Activated naive CD4-positive, alpha-beta T cell treated with anti-CD3 and anti-CD28 coated beads for 36 hours (primary cell): ENCODE measurements at regions of chr20 and their contacts with region 1.

Region 1: GRCh38 chr20:34111702-34112599 is at the start of gene EIF2S2:
- DNase-seq: peak; percentile 97
- H3K4me3 Mint-ChIP-seq: peak within 1 kb of the TSS; percentile 96
- H3K27ac Mint-ChIP-seq: peak within 1 kb of the TSS; percentile 93
- H3K4me1 Mint-ChIP-seq: peaks cover 38% of the 10 kb centered on the region
- H3K27me3 Mint-ChIP-seq: no peaks in the 10 kb centered on the region
- total RNA-seq, gene EIF2S2: 202 to 207 TPM

Region 2: DNA sequence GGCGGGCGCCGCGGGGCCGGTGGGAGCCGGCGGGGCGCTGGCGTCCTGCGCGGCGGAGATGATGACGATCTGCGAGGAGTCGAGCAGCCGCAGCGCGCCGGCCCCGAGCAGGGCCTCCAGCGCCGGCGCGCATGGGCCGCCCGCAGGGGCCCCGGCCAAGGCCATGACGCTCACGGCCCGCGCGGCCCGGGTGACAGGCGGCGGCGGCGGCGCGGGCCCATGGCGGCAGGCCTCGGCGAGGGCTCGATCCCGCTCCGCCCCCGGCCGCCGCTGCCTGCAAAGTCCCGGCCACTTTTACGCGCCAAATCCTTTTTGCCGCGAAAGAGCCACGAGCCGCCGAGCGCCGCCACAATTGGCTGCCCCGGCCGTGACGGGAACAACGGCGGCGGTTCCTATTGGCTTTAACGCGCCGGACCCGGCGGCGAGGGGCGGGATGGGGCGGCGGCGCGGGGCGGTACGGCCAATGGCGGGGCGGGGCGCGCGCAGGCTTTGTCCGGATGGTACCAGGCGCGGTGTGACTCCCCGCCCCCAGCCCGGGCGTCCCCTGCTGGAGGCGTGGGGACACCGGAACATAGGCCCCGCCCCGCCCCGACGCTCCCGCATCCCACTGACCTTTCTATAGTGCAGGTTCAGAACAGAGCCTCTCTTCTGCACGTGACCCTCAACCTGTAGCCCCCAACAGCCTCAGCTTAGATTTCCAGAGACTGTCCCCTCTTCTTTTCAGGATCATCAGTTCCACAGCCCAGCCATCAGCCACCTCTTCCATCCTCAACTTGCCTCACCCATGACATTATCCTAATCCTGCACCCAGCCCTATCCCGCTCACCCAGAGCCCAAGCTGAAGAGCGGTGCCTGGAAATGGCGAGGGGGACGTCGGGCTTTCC is 425.6 kb before region 1 on chr20 and contains the start of gene E2F1:
- CTCF ChIA-PET with region 1: no interaction called
- intact Hi-C with region 1: loop called (anchors 1 kb)
- DNase-seq: peak; percentile 97
- H3K4me3 Mint-ChIP-seq: peak within 1 kb of the TSS; percentile 87
- H3K27ac Mint-ChIP-seq: peak within 1 kb of the TSS; percentile 88
- H3K4me1 Mint-ChIP-seq: peaks cover 62% of the 10 kb centered on the region
- H3K27me3 Mint-ChIP-seq: no peaks in the 10 kb centered on the region
- total RNA-seq, gene E2F1: 69.3 to 70.0 TPM

Region 3: GRCh38 chr20:34069341-34070078 is 42.4 kb before region 1 on chr20:
- CTCF ChIA-PET with region 1: interaction called, 4 read pairs
- intact Hi-C with region 1: loop called (anchors 2 kb)
- DNase-seq: peak; percentile 72
- H3K4me3 Mint-ChIP-seq: no peak overlapping the region
- H3K27ac Mint-ChIP-seq: no peak overlapping the region
- H3K4me1 Mint-ChIP-seq: peaks cover 28% of the 10 kb centered on the region
- H3K27me3 Mint-ChIP-seq: no peaks in the 10 kb centered on the region

Region 4: GRCh38 chr20:34302723-34303528 is 191.0 kb after region 1 on chr20 and contains the start of gene AHCY:
- CTCF ChIA-PET with region 1: no interaction called
- intact Hi-C with region 1: loop called (anchors 1 kb)
- DNase-seq: peak; percentile 95
- H3K4me3 Mint-ChIP-seq: peak within 1 kb of the TSS; percentile 84
- H3K27ac Mint-ChIP-seq: peak within 1 kb of the TSS; percentile 86
- H3K4me1 Mint-ChIP-seq: peaks cover 4% of the 10 kb centered on the region
- H3K27me3 Mint-ChIP-seq: no peaks in the 10 kb centered on the region
- total RNA-seq, gene AHCY: 258 to 261 TPM

Region 5: DNA sequence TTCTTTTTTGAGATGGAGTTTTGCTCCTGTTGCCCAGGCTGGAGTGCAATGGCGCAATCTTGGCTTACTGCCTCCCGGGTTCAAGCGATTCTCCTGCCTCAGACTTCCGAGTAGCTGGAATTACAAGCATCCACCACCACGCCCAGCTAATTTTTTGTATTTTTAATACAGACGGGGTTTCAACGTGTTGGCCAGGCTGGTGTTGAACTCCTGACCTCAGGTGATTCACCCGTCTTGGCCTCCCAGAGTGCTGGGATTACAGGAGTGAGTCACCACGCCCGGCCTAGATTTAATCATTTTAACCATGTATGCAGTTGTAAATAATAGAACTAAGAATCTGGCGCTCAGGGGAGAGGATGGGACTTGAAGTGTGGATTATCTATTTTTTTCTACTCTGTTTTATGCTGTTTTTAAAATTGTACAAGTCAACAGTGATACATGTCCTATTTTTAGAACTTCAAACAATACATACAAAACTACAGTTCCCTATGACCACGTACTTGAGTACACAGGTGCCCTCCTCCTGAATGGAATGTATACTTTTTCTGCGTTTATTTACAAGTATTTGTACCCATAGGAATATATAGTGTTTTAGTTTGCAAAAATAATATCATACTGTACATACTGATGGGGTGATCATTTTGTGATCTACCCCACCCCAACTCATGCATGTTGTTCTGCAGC is 279.0 kb after region 1 on chr20:
- CTCF ChIA-PET with region 1: no interaction called
- intact Hi-C with region 1: no loop called
- DNase-seq: peak; percentile 61
- H3K4me3 Mint-ChIP-seq: no peak overlapping the region
- H3K27ac Mint-ChIP-seq: no peak overlapping the region
- H3K4me1 Mint-ChIP-seq: peaks cover 27% of the 10 kb centered on the region
- H3K27me3 Mint-ChIP-seq: no peaks in the 10 kb centered on the region

Region 6: GRCh38 chr20:34516247-34517113 is 404.5 kb after region 1 on chr20 and contains the start of gene DYNLRB1:
- CTCF ChIA-PET with region 1: no interaction called
- intact Hi-C with region 1: loop called (anchors 10 kb)
- DNase-seq: peak; percentile 96
- H3K4me3 Mint-ChIP-seq: peak within 1 kb of the TSS; percentile 98
- H3K27ac Mint-ChIP-seq: peak within 1 kb of the TSS; percentile 96
- H3K4me1 Mint-ChIP-seq: peaks cover 29% of the 10 kb centered on the region
- H3K27me3 Mint-ChIP-seq: no peaks in the 10 kb centered on the region
- total RNA-seq, gene DYNLRB1: 81.9 to 92.9 TPM

Region 7: GRCh38 chr20:34676642-34677373 is 564.9 kb after region 1 on chr20 and contains the start of gene PIGU:
- CTCF ChIA-PET with region 1: no interaction called
- intact Hi-C with region 1: loop called (anchors 1 kb)
- DNase-seq: peak; percentile 97
- H3K4me3 Mint-ChIP-seq: peak within 1 kb of the TSS; percentile 97
- H3K27ac Mint-ChIP-seq: peak within 1 kb of the TSS; percentile 90
- H3K4me1 Mint-ChIP-seq: peaks cover 29% of the 10 kb centered on the region
- H3K27me3 Mint-ChIP-seq: no peaks in the 10 kb centered on the region
- total RNA-seq, gene PIGU: 18.8 to 18.9 TPM